H1 (cell line): ENCODE measurements at regions of chr17 and their contacts with region 1.

Region 1: GRCh38 chr17:41844971-41845370 is 7.3 kb downstream of the KLHL10 start:
- DNase-seq: no peak
- H3K4me3 ChIP-seq: no peak overlapping the region
- H3K27ac ChIP-seq: no peak overlapping the region
- H3K4me1 ChIP-seq: no peaks in the 10 kb centered on the region
- H3K27me3 ChIP-seq: no peaks in the 10 kb centered on the region
- CTCF ChIP-seq: no peak
- EP300 ChIP-seq: no peak
- POLR2A ChIP-seq: no peak
- RAD21 ChIP-seq: no peak

Region 2: GRCh38 chr17:41864836-41865595 is 20.0 kb after region 1 on chr17 and contains the start of gene KLHL11:
- CTCF ChIA-PET with region 1: interaction called, 5 read pairs
- POLR2A ChIA-PET with region 1: interaction called, 11 read pairs
- DNase-seq: peak; percentile 58 to 90
- H3K4me3 ChIP-seq: peak within 1 kb of the TSS; percentile 86 to 94 (median 92)
- H3K27ac ChIP-seq: peak within 1 kb of the TSS; percentile 42
- H3K4me1 ChIP-seq: peaks cover 9 to 25% (median 13%) of the 10 kb centered on the region in 4 experiments
- H3K27me3 ChIP-seq: no peaks in the 10 kb centered on the region
- CTCF ChIP-seq: no peak; a peak in 1 of 4 replicates
- EP300 ChIP-seq: peak in 1 of 2 experiments; percentile 56; a peak in 1 of 3 replicates
- POLR2A ChIP-seq: peak; percentile 42 to 87
- RAD21 ChIP-seq: peak in 1 of 2 experiments; percentile 0; a peak in 2 of 4 replicates
- total RNA-seq, gene KLHL11: 12.8 and 13.7 TPM in 2 replicates